ENCODE measurements at regions of chr16 and their contacts with region 1.

Region 1: DNA sequence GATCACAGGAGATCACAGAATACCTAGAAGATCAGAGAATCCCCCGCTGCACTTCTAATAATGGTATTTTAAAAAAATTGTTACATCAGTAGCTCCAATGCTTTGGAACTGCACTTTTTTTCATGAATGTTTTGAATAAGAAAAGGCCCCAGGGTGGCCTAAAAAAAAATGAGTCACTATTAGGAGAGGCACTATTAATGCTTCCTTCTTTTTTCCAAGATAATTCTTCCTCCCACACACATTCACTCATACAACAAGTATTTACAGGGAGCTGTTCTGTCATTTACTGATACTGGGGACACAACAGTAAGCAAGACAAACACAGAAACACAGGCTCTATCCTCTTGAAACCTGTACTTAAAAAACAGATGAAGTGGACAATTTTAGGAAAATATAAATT is 675 bp upstream of the PDZD9 start:
- DNase-seq: no peak
- CTCF ChIP-seq: no peak

Region 2: DNA sequence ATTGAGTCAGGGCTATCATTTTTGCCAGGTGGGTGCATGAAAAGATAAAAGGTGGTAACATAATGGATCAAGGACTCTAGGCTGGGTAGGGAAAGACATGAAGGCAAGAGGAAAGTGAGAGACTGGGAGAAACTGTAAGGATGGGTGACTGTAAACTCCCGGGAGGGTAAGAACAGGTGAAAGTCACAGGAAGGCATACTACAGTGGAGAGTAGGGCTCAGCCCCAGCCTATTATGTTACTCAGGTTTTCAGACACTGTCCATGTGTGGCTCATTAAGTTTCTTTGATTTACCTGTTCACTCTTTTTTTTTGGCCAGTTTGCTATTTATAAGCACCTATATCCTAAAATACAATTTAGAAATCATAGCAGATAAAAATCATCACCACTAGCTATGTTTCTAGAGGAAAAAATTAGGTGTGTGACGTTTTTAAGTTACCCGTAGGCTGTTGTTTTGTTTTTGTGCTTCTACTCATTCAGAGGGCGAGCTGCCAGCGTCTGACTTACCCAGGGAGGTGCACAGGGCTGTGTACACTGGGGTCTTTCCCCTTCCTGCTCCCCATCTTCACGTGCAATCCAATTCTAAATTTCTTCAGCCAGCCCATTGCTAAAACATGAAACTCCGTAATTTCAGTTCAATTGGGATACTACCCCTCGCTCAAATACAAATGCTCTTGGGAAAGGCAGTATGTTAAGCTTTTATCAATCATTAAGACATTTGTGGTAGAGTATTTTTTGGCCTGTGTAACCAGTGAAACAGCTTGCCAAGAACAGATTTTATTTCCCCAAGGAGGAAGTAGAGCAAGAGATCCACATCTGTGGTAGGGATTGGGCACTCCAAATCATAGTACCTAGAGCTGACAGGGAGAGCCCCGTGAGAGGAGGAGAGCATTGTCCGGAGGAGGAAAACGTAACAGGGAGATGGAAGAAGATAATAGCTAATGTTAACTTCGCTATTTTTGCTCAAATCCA is 69.1 kb after region 1 on chr16:
- in situ Hi-C with region 1: loop called (anchors 5 kb)
- DNase-seq: no peak
- CTCF ChIP-seq: no peak

Region 3: GRCh38 chr16:22098405-22099255 is 97.0 kb after region 1 on chr16:
- in situ Hi-C with region 1: loop called (anchors 10 kb)
- DNase-seq: peak; percentile 66
- CTCF ChIP-seq: peak; percentile 81

Region 4: DNA sequence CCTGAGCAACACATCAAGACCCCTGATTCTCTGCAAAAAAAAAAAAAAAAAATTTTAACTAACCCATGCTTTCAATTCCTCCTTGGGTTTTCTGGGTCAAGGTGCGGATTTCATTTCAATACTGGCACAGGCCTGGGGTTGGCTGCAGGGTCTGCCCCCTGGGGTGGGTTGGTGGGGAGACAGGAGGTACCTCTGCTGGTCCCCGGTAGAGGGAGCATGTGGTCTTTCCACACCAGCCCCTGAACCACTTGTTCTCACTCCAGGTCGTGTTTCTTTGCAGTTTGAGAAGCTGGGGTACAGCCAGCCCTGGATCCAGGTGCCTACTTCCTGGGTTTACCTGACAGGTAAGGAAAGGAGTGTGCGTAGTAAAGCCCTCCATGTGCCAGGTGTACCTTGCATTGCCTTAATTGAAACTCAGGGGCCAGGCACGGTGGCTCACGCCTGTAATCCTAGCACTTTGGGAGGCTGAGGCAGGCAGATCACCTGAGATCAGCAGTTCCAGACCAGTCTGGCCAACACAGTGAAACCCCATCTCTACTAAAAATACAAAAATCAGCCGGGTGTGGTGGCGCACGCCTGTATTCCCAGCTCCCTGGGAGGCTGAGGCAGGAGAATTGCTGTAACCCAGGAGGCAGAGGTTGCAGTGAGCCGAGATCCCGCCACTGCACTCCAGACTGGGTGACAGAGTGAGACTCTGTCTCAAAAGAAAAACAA is 182.5 kb after region 1 on chr16:
- in situ Hi-C with region 1: loop called (anchors 5 kb)
- DNase-seq: peak; percentile 58
- CTCF ChIP-seq: peak; percentile 19

Region 5: GRCh38 chr16:22903716-22904115 is 902.1 kb after region 1 on chr16:
- in situ Hi-C with region 1: no loop called
- DNase-seq: no peak
- CTCF ChIP-seq: no peak

Measured in GM13976 (cell line).